ENCODE measurements at regions of chr4 and their contacts with region 1.

Region 1: GRCh38 chr4:84750253-84750959 is 167.5 kb downstream of the CDS1 start:
- DNase-seq: no peak
- ATAC-seq: peak in 1 of 2 donors; percentile 59
- H3K4me3 ChIP-seq: no peak overlapping the region
- H3K27ac ChIP-seq: no peak overlapping the region
- H3K4me1 ChIP-seq: no peaks in the 10 kb centered on the region
- H3K27me3 ChIP-seq: no peaks in the 10 kb centered on the region

Region 2: DNA sequence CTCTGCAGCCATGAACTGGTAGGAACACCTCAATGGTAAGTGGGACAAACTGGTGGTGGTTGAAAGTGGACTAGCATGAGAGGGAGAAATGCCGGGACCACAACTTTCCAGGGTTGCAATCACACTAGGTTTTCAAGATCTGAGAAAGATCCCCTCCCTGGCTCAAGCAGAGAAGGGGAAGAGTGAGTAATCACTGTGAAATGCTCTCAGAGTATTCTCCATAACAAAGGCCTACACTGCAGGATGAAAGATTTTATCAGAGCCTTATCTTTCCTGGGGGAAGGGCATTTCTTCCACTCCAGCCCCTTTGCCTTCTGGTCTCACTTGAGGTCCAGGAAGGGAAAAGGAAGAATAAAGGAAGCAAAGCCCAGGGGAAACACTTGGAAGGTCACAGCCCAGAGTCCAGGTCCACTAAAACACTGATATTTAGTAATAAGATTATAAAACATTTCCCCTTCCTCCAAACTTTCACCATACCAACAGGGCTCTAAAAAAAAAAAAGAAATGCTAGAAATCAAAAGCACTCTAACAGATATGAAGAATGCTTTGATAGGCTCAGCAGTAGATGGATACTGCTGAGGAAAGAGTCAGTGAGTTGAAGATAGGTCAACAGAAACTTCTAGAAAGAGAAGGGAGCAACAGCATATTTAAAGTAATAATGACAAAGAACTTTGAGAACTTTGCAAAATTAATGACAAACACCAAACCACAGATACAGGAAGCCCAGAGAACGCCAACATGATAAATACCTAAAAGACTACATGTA is 120.2 kb after region 1 on chr4:
- intact Hi-C with region 1: no loop called
- DNase-seq: no peak
- ATAC-seq: peak in 1 of 2 donors; percentile 78
- H3K4me3 ChIP-seq: no peak overlapping the region
- H3K27ac ChIP-seq: no peak overlapping the region
- H3K4me1 ChIP-seq: peaks cover 5% of the 10 kb centered on the region
- H3K27me3 ChIP-seq: no peaks in the 10 kb centered on the region

Region 3: GRCh38 chr4:84977396-84977795 is 227.0 kb after region 1 on chr4:
- intact Hi-C with region 1: loop called in 3 of 4 experiments (anchors 5 kb)
- DNase-seq: no peak
- ATAC-seq: no peak
- H3K4me3 ChIP-seq: no peak overlapping the region
- H3K27ac ChIP-seq: no peak overlapping the region
- H3K4me1 ChIP-seq: no peaks in the 10 kb centered on the region
- H3K27me3 ChIP-seq: no peaks in the 10 kb centered on the region

Region 4: GRCh38 chr4:85180533-85180932 is 430.1 kb after region 1 on chr4:
- intact Hi-C with region 1: no loop called
- DNase-seq: no peak
- ATAC-seq: no peak
- H3K4me3 ChIP-seq: no peak overlapping the region
- H3K27ac ChIP-seq: no peak overlapping the region
- H3K4me1 ChIP-seq: no peaks in the 10 kb centered on the region
- H3K27me3 ChIP-seq: no peaks in the 10 kb centered on the region